ENCODE measurements at regions of chr7 and their contacts with region 1.

Region 1: DNA sequence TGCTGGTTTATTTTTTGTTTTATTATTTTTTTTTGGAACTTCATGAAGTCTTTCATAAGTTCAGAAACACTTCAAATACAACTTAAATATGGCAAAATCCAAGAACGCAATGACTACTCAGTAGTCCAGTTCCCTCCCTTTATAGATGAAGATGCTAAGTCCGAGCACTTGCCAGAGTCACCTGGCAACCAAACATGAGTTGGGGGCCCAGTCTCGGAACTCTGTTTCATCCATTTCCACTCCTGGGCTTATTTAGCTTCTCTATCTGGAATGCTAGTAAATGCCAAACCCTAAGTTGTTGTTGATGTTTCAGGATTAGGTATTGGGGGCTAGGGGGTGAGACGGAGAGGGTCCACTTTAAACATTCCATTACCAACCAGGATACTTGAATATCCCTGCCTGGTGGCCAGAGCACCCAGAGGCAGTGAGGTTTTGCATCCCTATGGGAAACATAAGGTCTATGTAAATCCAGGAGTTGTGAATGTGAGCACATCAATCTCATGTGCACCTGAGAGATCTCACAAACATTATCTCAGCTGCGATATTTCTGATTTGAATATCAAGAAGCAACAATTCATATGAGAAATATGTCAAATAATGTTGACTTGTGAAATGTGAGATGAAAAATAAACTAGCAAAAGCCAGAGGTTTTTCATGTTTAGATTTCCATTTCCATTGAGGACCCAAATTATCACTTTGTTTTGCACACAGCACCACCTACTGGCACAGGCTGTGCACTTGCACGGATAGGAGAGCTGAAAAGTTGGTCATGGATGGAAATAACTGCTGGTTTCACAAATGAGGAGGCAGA is 129.3 kb downstream of the PKD1L1 start:
- DNase-seq: peak; percentile 56 to 75
- ATAC-seq: peak; percentile 70 to 91 (median 78)
- H3K4me3 ChIP-seq: no peak overlapping the region
- H3K27ac ChIP-seq: no peak overlapping the region
- H3K4me1 ChIP-seq: no peaks in the 10 kb centered on the region
- H3K27me3 ChIP-seq: no peaks in the 10 kb centered on the region
- CTCF ChIP-seq: peak; percentile 97

Region 2: GRCh38 chr7:47266131-47266706 is 552.8 kb before region 1 on chr7:
- intact Hi-C with region 1: loop called (anchors 2 to 5 kb)
- DNase-seq: peak; percentile 50 to 74
- ATAC-seq: peak; percentile 82 to 90 (median 86)
- H3K4me3 ChIP-seq: no peak overlapping the region
- H3K27ac ChIP-seq: no peak overlapping the region
- H3K4me1 ChIP-seq: peaks cover 4% of the 10 kb centered on the region
- H3K27me3 ChIP-seq: no peaks in the 10 kb centered on the region
- CTCF ChIP-seq: peak; percentile 94

Region 3: DNA sequence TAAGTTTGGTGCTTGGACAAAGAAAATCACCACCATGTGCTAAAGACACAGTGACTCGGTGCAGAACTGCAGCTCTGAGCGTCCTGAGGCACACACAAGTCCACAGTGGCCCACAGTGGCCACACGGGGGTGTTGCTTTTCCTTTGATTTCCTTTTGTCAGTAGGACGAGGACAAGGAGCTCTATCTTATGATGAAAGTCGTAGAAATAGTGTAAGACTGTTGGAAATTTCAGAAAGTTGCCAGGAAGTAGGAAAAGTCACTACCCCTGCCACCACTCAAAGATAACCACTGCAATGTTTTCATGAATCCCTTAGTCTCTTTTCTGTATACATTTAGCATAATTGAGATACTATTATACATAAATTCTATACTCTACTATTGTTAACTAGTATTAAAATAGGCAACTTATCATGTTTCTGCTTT is 383.1 kb before region 1 on chr7:
- intact Hi-C with region 1: loop called (anchors 5 kb)
- DNase-seq: peak; percentile 73 to 78
- ATAC-seq: peak; percentile 73 to 89 (median 80)
- H3K4me3 ChIP-seq: no peak overlapping the region
- H3K27ac ChIP-seq: no peak overlapping the region
- H3K4me1 ChIP-seq: no peaks in the 10 kb centered on the region
- H3K27me3 ChIP-seq: no peaks in the 10 kb centered on the region
- CTCF ChIP-seq: peak; percentile 72

Region 4: GRCh38 chr7:47571331-47572093 is 247.5 kb before region 1 on chr7:
- intact Hi-C with region 1: loop called in 1 of 2 experiments (anchors 10 kb)
- DNase-seq: peak; percentile 84 to 86
- ATAC-seq: peak; percentile 71 to 76 (median 72)
- H3K4me3 ChIP-seq: peak overlapping the region; percentile 33
- H3K27ac ChIP-seq: peak overlapping the region; percentile 58
- H3K4me1 ChIP-seq: peaks cover 30% of the 10 kb centered on the region
- H3K27me3 ChIP-seq: peaks cover 0 to 2% (median 0%) of the 10 kb centered on the region in 3 donors
- CTCF ChIP-seq: no peak

Region 5: GRCh38 chr7:47581806-47582763 is 236.9 kb before region 1 on chr7 and contains the start of gene TNS3:
- intact Hi-C with region 1: loop called (anchors 10 kb)
- DNase-seq: peak; percentile 58 to 65
- ATAC-seq: peak; percentile 63 to 81 (median 74)
- H3K4me3 ChIP-seq: peak within 1 kb of the TSS; percentile 73
- H3K27ac ChIP-seq: peak within 1 kb of the TSS; percentile 21
- H3K4me1 ChIP-seq: peaks cover 17% of the 10 kb centered on the region
- H3K27me3 ChIP-seq: no peaks in the 10 kb centered on the region
- CTCF ChIP-seq: peak; percentile 25
- total RNA-seq, gene TNS3: 35.0 to 75.3 (median 45.6) TPM

Region 6: DNA sequence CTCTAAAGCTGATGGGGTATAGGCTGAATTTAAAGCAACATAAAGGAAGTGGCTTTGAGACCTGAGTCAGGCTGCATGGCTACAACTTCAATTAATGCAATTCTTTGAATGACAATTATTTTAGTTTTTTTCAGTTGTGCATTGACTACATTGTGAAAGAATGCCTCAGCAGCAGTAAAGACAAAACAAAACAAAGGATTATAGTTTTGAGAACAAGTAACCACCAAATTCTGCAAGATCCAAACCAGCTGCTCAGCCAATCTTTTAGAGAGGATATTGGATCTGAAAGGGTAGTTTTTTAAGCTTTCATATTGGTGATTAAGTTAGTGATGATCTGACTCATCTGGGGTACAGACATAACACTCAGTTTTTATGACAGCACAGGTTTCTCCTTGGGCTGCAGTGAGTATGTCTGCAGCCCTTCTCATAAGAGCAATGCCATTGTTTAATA is 311.7 kb after region 1 on chr7:
- intact Hi-C with region 1: no loop called
- DNase-seq: no peak
- ATAC-seq: no peak
- H3K4me3 ChIP-seq: no peak overlapping the region
- H3K27ac ChIP-seq: no peak overlapping the region
- H3K4me1 ChIP-seq: no peaks in the 10 kb centered on the region
- H3K27me3 ChIP-seq: peaks cover 0 to 4% (median 0%) of the 10 kb centered on the region in 3 donors
- CTCF ChIP-seq: no peak

Measured in psoas muscle (tissue), 8 donors.